ENCODE measurements at regions of chr16 and their contacts with region 1.

Region 1: DNA sequence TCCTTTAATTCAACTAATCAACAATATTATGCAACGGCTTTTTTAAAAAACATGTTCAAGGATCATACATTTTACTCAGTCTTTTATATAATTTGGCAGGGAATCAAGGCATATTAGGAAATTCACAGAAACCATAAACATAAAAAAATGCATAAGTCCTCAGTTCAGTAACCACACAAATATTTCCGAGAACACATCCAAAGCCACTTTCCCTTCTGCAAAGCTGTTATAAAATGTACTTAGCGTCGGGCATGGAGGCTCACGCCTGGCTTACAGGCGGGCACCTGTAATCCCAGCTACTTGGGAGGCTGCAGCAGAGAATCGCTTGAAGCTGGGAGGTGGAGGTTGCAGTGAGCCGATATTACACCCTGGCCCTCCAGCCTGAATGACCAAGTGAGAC is 9.7 kb upstream of the ZC3H7A start:
- DNase-seq: no peak
- ATAC-seq: no peak
- H3K4me3 ChIP-seq: no peak overlapping the region
- H3K4me3 Mint-ChIP-seq: no peak overlapping the region
- H3K27ac ChIP-seq: no peak overlapping the region
- H3K27ac Mint-ChIP-seq: no peak overlapping the region
- H3K4me1 ChIP-seq: peaks cover 8% of the 10 kb centered on the region
- H3K4me1 Mint-ChIP-seq: peaks cover 11% of the 10 kb centered on the region
- H3K27me3 ChIP-seq: no peaks in the 10 kb centered on the region
- H3K27me3 Mint-ChIP-seq: no peaks in the 10 kb centered on the region
- CTCF ChIP-seq: no peak

Region 2: DNA sequence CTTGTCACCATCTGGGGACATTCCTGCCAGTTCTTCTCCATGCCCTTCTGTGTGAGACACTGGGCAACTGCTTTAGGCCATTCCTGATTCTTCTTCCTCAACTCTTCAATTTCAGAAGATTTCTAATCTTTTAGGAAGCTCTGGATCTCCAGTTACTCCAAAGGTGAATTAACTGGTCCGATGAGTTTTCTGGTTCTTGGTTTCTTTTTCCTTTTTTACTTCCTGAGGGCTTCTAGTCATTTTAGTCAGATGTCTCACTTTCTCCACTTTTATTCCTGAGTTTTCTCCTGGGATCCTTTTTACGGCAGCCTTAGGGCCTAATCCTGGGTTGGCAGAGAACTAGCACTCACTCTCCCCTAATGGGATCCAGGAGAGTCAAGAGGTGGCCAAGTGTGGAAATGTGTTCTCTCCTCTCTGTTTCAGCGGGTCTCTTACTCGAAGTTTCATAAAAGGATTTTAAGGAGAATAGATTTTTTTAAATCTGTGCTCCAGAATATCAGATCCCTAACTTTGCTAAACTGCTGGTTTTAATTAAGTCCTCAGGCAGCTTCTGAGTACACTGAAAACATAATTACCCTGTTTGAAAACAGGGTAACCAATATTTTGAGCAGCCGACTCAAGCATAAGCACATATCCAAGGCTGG is 353.9 kb before region 1 on chr16:
- CTCF ChIA-PET with region 1: no interaction called
- POLR2A ChIA-PET with region 1: no interaction called
- intact Hi-C with region 1: no loop called
- DNase-seq: no peak
- ATAC-seq: no peak
- H3K4me3 ChIP-seq: no peak overlapping the region
- H3K4me3 Mint-ChIP-seq: no peak overlapping the region
- H3K27ac ChIP-seq: no peak overlapping the region
- H3K27ac Mint-ChIP-seq: no peak overlapping the region
- H3K4me1 ChIP-seq: no peaks in the 10 kb centered on the region
- H3K4me1 Mint-ChIP-seq: no peaks in the 10 kb centered on the region
- H3K27me3 ChIP-seq: no peaks in the 10 kb centered on the region
- H3K27me3 Mint-ChIP-seq: no peaks in the 10 kb centered on the region
- CTCF ChIP-seq: no peak

Region 3: GRCh38 chr16:11611871-11612664 is 194.7 kb before region 1 on chr16:
- CTCF ChIA-PET with region 1: no interaction called
- POLR2A ChIA-PET with region 1: no interaction called
- intact Hi-C with region 1: no loop called
- DNase-seq: peak in 1 of 14 experiments; percentile 37
- ATAC-seq: no peak
- H3K4me3 ChIP-seq: no peak overlapping the region
- H3K4me3 Mint-ChIP-seq: no peak overlapping the region
- H3K27ac ChIP-seq: no peak overlapping the region
- H3K27ac Mint-ChIP-seq: no peak overlapping the region
- H3K4me1 ChIP-seq: peaks cover 29% of the 10 kb centered on the region
- H3K4me1 Mint-ChIP-seq: peaks cover 29% of the 10 kb centered on the region
- H3K27me3 ChIP-seq: no peaks in the 10 kb centered on the region
- H3K27me3 Mint-ChIP-seq: no peaks in the 10 kb centered on the region
- CTCF ChIP-seq: no peak

Region 4: DNA sequence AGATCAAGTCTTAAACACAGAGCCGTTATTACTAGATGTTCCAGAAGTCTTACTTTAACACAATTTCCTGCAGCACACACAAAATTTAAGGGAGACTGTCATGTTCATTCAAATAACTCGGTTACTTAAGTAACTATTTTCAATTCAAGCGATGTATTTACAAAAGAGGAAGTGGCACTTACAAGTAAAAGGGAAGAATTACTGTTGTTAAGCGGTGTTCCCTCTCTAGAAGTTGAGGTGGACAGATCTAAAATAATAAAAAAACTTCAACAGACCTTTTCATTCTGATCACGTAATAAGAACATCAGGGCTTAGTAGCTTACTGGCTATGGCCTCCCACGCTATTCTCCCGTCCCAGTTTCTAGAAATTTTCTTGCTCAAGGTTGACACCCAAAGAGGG is 37.9 kb before region 1 on chr16:
- CTCF ChIA-PET with region 1: no interaction called
- POLR2A ChIA-PET with region 1: no interaction called
- intact Hi-C with region 1: loop called in 1 of 2 experiments (anchors 5 kb)
- DNase-seq: no peak
- ATAC-seq: no peak
- H3K4me3 ChIP-seq: no peak overlapping the region
- H3K4me3 Mint-ChIP-seq: no peak overlapping the region
- H3K27ac ChIP-seq: peak overlapping the region in 1 of 2 donors; percentile 2
- H3K27ac Mint-ChIP-seq: peak overlapping the region; percentile 58
- H3K4me1 ChIP-seq: no peaks in the 10 kb centered on the region
- H3K4me1 Mint-ChIP-seq: peaks cover 16% of the 10 kb centered on the region
- H3K27me3 ChIP-seq: no peaks in the 10 kb centered on the region
- H3K27me3 Mint-ChIP-seq: no peaks in the 10 kb centered on the region
- CTCF ChIP-seq: no peak

Measured in CD4-positive, alpha-beta T cell (primary cell).